ENCODE measurements at regions of chr13 and their contacts with region 1.

Region 1: GRCh38 chr13:50713523-50714248 is 129.8 kb downstream of the DLEU7 start:
- DNase-seq: no peak
- H3K4me3 ChIP-seq: no peak overlapping the region
- H3K27ac ChIP-seq: no peak overlapping the region
- H3K4me1 ChIP-seq: no peaks in the 10 kb centered on the region
- H3K27me3 ChIP-seq: no peaks in the 10 kb centered on the region
- CTCF ChIP-seq: no peak

Region 2: GRCh38 chr13:49858183-49858856 is 855.4 kb before region 1 on chr13:
- intact Hi-C with region 1: no loop called
- DNase-seq: no peak
- H3K4me3 ChIP-seq: no peak overlapping the region
- H3K27ac ChIP-seq: no peak overlapping the region
- H3K4me1 ChIP-seq: peaks cover 0 to 9% (median 0%) of the 10 kb centered on the region in 4 donors
- H3K27me3 ChIP-seq: no peaks in the 10 kb centered on the region
- CTCF ChIP-seq: no peak

Region 3: GRCh38 chr13:50758796-50759195 is 45.1 kb after region 1 on chr13:
- intact Hi-C with region 1: loop called (anchors 2 kb)
- DNase-seq: no peak
- H3K4me3 ChIP-seq: no peak overlapping the region
- H3K27ac ChIP-seq: no peak overlapping the region
- H3K4me1 ChIP-seq: no peaks in the 10 kb centered on the region
- H3K27me3 ChIP-seq: no peaks in the 10 kb centered on the region
- CTCF ChIP-seq: no peak

Measured in tibial artery (tissue), 4 donors.